ENCODE measurements at regions of chr20 and their contacts with region 1.

Region 1: GRCh38 chr20:35092524-35093266 is at the start of gene TRPC4AP:
- DNase-seq: peak; percentile 77 to 95 (median 87)
- ATAC-seq: peak; percentile 97
- H3K4me3 ChIP-seq: peak within 1 kb of the TSS; percentile 84 to 91
- H3K4me3 Mint-ChIP-seq: peak within 1 kb of the TSS; percentile 89
- H3K27ac ChIP-seq: peak within 1 kb of the TSS; percentile 72 to 74
- H3K27ac Mint-ChIP-seq: peak within 1 kb of the TSS; percentile 91
- H3K4me1 ChIP-seq: peaks cover 42% of the 10 kb centered on the region
- H3K4me1 Mint-ChIP-seq: peaks cover 49% of the 10 kb centered on the region
- H3K27me3 ChIP-seq: no peaks in the 10 kb centered on the region
- H3K27me3 Mint-ChIP-seq: no peaks in the 10 kb centered on the region
- CTCF ChIP-seq: peak; percentile 88
- total RNA-seq, gene TRPC4AP: 63.3 to 64.0 TPM

Region 2: GRCh38 chr20:34676642-34677373 is 415.9 kb before region 1 on chr20 and contains the start of gene PIGU:
- CTCF ChIA-PET with region 1: no interaction called
- POLR2A ChIA-PET with region 1: interaction called, 3 read pairs
- intact Hi-C with region 1: loop called in 1 of 2 experiments (anchors 2 kb)
- DNase-seq: peak; percentile 92 to 98 (median 96)
- ATAC-seq: peak; percentile 96
- H3K4me3 ChIP-seq: peak within 1 kb of the TSS; percentile 80 to 94
- H3K4me3 Mint-ChIP-seq: peak within 1 kb of the TSS; percentile 97
- H3K27ac ChIP-seq: peak within 1 kb of the TSS; percentile 83 to 90
- H3K27ac Mint-ChIP-seq: peak within 1 kb of the TSS; percentile 96
- H3K4me1 ChIP-seq: peaks cover 16% of the 10 kb centered on the region
- H3K4me1 Mint-ChIP-seq: peaks cover 22% of the 10 kb centered on the region
- H3K27me3 ChIP-seq: no peaks in the 10 kb centered on the region
- H3K27me3 Mint-ChIP-seq: no peaks in the 10 kb centered on the region
- CTCF ChIP-seq: no peak
- total RNA-seq, gene PIGU: 3.3 to 5.2 TPM

Region 3: DNA sequence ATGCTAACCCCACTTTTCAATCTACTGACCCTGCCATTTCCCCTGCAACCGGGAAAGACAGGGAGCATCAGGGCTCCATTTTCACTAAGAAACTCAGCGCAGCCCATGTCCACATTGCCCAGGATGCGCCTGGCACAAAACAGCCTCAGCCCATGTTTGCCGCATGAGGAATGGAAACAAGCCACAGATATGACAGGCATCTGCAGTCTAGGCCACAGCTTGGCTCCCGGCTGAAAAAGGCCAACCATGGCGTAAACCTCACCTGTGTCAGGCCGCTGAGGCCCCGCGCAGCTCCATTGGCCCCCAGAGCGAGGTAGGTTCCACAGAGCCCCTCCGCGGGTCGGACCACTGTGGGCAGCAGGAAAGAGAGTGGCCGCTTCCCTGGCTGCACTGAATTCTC is 241.7 kb before region 1 on chr20:
- CTCF ChIA-PET with region 1: no interaction called
- POLR2A ChIA-PET with region 1: no interaction called
- intact Hi-C with region 1: no loop called
- DNase-seq: no peak
- ATAC-seq: no peak
- H3K4me3 ChIP-seq: no peak overlapping the region
- H3K4me3 Mint-ChIP-seq: no peak overlapping the region
- H3K27ac ChIP-seq: no peak overlapping the region
- H3K27ac Mint-ChIP-seq: no peak overlapping the region
- H3K4me1 ChIP-seq: no peaks in the 10 kb centered on the region
- H3K4me1 Mint-ChIP-seq: no peaks in the 10 kb centered on the region
- H3K27me3 ChIP-seq: no peaks in the 10 kb centered on the region
- H3K27me3 Mint-ChIP-seq: no peaks in the 10 kb centered on the region
- CTCF ChIP-seq: no peak

Region 4: DNA sequence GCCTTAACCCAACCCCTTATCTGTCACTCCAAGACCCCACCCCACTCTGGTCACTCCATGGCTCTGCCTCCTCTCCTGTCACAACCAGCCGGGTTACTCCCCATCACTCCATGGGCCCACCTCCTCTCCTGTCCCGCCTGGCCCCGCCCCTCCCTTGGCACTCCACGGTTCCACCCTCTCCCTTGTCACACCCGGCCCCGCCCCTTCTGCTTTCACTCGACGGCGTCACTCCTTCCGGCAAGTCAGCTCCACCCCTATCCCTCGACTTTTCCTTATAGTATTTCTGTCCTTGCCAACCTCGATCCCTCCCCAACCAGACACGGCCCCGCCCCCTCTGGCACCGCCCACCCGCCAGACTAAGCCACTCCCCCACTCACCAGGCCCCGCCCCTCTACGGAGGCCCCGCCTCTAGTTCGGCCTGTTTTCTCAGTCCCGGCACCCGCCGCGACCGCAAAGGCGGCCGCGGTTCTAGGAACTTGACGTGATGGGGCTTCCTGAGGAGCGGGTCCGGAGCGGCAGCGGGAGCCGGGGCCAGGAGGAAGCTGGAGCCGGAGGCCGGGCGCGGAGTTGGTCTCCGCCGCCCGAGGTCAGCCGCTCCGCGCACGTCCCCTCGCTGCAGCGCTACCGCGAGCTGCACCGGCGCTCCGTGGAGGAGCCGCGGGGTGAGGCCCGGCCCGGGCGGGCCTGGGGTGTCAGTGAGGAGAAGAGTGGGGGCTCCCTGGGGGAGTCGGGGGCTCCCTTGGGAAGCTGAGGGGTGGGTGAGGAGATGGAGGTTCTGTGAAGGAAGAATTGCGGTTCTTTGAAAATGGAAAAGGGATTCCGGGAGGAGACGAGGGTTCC is 216.3 kb before region 1 on chr20 and contains the start of gene ACSS2:
- CTCF ChIA-PET with region 1: interaction called, 4 read pairs
- POLR2A ChIA-PET with region 1: no interaction called
- intact Hi-C with region 1: loop called (anchors 1 to 2 kb)
- DNase-seq: peak; percentile 85 to 97 (median 91)
- ATAC-seq: peak; percentile 85
- H3K4me3 ChIP-seq: peak within 1 kb of the TSS; percentile 55 to 68
- H3K4me3 Mint-ChIP-seq: peak within 1 kb of the TSS; percentile 89
- H3K27ac ChIP-seq: peak within 1 kb of the TSS in 1 of 2 experiments; percentile 24
- H3K27ac Mint-ChIP-seq: peak within 1 kb of the TSS; percentile 57
- H3K4me1 ChIP-seq: peaks cover 46% of the 10 kb centered on the region
- H3K4me1 Mint-ChIP-seq: peaks cover 54% of the 10 kb centered on the region
- H3K27me3 ChIP-seq: no peaks in the 10 kb centered on the region
- H3K27me3 Mint-ChIP-seq: no peaks in the 10 kb centered on the region
- CTCF ChIP-seq: no peak
- total RNA-seq, gene ACSS2: 6.5 to 12.7 TPM

Region 5: DNA sequence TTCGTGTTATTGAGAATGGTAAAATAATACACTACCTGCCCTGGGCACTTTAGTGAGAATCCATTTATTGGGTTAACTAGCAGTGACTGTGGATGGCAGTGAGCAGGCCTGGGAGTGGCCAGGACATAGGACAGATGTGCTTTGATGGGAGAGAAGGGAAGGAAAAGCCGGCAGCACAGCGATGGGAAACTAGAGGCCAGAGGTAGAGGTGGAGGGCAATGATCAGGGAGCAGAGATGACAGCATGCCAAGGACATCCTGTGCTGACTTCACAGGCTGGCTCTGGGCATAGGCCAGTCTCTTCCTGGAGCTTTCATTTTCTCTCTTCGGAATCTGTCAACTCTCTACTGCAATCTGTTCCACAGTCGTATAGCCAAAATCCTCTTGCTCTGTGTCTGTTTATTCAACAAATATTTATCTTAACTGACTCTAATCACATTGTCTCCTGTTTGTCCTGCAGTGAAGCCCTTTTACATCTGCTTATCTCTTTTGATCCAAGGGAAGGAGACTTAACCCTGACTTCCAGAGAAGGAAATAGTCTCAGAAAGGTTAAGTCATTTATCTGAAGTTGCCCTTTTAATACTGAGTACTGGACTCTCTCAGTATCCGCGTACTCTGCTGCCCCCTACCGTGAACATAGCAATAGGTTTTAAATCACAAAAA is 115.4 kb after region 1 on chr20:
- CTCF ChIA-PET with region 1: interaction called, 60 read pairs
- POLR2A ChIA-PET with region 1: interaction called, 3 read pairs
- intact Hi-C with region 1: loop called in 1 of 2 experiments (anchors 1 kb)
- DNase-seq: peak; percentile 54 to 87 (median 82)
- ATAC-seq: peak; percentile 86
- H3K4me3 ChIP-seq: no peak overlapping the region
- H3K4me3 Mint-ChIP-seq: no peak overlapping the region
- H3K27ac ChIP-seq: no peak overlapping the region
- H3K27ac Mint-ChIP-seq: no peak overlapping the region
- H3K4me1 ChIP-seq: no peaks in the 10 kb centered on the region
- H3K4me1 Mint-ChIP-seq: no peaks in the 10 kb centered on the region
- H3K27me3 ChIP-seq: no peaks in the 10 kb centered on the region
- H3K27me3 Mint-ChIP-seq: no peaks in the 10 kb centered on the region
- CTCF ChIP-seq: peak; percentile 77

Region 6: GRCh38 chr20:35243986-35244385 is 151.3 kb after region 1 on chr20:
- CTCF ChIA-PET with region 1: no interaction called
- POLR2A ChIA-PET with region 1: no interaction called
- intact Hi-C with region 1: no loop called
- DNase-seq: no peak
- ATAC-seq: no peak
- H3K4me3 ChIP-seq: no peak overlapping the region
- H3K4me3 Mint-ChIP-seq: no peak overlapping the region
- H3K27ac ChIP-seq: no peak overlapping the region
- H3K27ac Mint-ChIP-seq: no peak overlapping the region
- H3K4me1 ChIP-seq: no peaks in the 10 kb centered on the region
- H3K4me1 Mint-ChIP-seq: no peaks in the 10 kb centered on the region
- H3K27me3 ChIP-seq: no peaks in the 10 kb centered on the region
- H3K27me3 Mint-ChIP-seq: peaks cover 2% of the 10 kb centered on the region
- CTCF ChIP-seq: no peak

Region 7: GRCh38 chr20:35277531-35278395 is 185.1 kb after region 1 on chr20 and contains the start of gene MMP24OS:
- CTCF ChIA-PET with region 1: interaction called, 5 read pairs
- POLR2A ChIA-PET with region 1: interaction called, 4 read pairs
- intact Hi-C with region 1: loop called (anchors 2 kb)
- DNase-seq: peak; percentile 78 to 96 (median 89)
- ATAC-seq: peak; percentile 88
- H3K4me3 ChIP-seq: peak within 1 kb of the TSS; percentile 81
- H3K4me3 Mint-ChIP-seq: peak within 1 kb of the TSS; percentile 96
- H3K27ac ChIP-seq: peak within 1 kb of the TSS; percentile 92 to 99
- H3K27ac Mint-ChIP-seq: peak within 1 kb of the TSS; percentile 99
- H3K4me1 ChIP-seq: peaks cover 14% of the 10 kb centered on the region
- H3K4me1 Mint-ChIP-seq: peaks cover 28% of the 10 kb centered on the region
- H3K27me3 ChIP-seq: no peaks in the 10 kb centered on the region
- H3K27me3 Mint-ChIP-seq: no peaks in the 10 kb centered on the region
- CTCF ChIP-seq: no peak
- total RNA-seq, gene MMP24OS: 64.5 to 67.1 TPM

Measured in CD8-positive, alpha-beta T cell (primary cell).